OCI-LY7 (cell line): ENCODE measurements at regions of chr1 and their contacts with region 1.

Region 1: DNA sequence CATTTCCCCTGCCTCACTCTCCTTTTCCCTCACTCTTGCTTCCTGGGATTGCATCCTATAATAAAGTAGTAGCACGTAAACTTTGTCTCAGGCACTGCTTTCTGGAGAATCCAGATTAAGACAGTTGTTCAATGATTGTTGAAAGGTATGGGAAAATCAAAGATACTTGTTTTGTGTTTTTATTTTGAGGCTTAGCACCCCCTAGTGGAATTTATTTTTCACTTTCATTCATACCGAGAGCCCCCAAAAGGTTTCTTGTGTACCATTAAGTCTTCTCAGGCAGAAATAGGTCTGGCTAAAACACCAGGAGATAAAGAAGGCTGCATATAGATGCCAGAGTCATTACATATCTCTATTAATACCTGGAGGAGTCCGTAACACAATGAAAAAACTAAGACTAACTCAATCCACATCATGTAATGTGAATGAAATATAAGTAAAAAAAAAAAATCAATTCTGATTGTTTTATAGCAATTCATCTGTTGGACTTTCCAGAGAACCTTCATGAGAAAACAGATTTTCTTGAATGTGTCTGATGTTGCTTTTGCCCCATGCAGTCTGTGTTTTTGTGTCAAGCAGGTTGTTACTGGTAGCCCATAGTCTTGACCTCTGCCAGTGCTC is 103.5 kb downstream of the RPE65 start:
- DNase-seq: peak; percentile 29
- H3K4me3 ChIP-seq: no peak overlapping the region
- H3K27ac ChIP-seq: no peak overlapping the region
- H3K4me1 ChIP-seq: no peaks in the 10 kb centered on the region
- CTCF ChIP-seq: peak; percentile 86

Region 2: DNA sequence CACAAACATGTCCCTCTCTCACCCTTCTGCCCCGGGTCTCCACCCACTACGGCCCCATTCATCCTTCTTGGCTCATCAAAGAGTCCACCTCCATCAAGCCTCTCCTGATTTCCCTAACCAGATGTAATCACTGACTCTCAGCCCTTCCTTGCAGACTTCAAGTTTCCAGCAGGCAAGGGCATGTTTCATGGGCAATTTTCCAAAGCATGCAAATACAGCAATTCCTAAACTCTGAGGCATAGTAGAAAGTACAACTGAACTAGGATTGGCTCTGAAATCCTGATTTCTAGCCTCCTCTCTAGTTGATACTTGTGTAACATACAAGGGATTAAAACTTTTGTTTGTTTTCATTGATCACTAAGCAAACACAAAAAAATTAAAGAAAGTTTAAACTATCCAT is 770.4 kb before region 1 on chr1:
- CTCF ChIA-PET with region 1: no interaction called
- POLR2A ChIA-PET with region 1: no interaction called
- intact Hi-C with region 1: no loop called
- DNase-seq: no peak
- H3K4me3 ChIP-seq: no peak overlapping the region
- H3K27ac ChIP-seq: no peak overlapping the region
- H3K4me1 ChIP-seq: no peaks in the 10 kb centered on the region
- CTCF ChIP-seq: no peak

Region 3: DNA sequence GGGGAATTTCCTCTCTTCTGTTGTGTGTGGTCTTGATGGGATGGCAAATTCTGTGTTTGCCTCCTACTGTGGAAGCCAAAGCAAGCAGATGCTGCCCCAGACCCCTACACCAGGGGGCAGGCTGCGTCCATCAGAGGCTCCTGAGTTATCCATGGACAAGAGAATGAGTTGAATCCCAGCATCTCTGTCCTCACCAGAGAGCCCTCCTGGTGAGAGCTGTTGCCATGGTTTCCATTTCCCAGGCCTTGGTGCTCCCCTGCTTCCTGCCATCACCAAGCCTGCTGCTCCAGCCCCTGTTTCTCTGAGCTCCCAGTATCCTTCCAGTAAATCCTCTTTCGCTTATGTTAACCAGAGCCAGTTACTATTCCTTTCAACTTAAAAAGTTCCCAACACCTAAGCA is 492.6 kb before region 1 on chr1:
- CTCF ChIA-PET with region 1: no interaction called
- POLR2A ChIA-PET with region 1: no interaction called
- intact Hi-C with region 1: loop called (anchors 10 kb)
- DNase-seq: peak; percentile 21
- H3K4me3 ChIP-seq: no peak overlapping the region
- H3K27ac ChIP-seq: no peak overlapping the region
- H3K4me1 ChIP-seq: no peaks in the 10 kb centered on the region
- CTCF ChIP-seq: peak; percentile 75

Region 4: GRCh38 chr1:68206848-68207689 is 139.2 kb before region 1 on chr1:
- CTCF ChIA-PET with region 1: no interaction called
- POLR2A ChIA-PET with region 1: no interaction called
- intact Hi-C with region 1: no loop called
- DNase-seq: no peak
- H3K4me3 ChIP-seq: no peak overlapping the region
- H3K27ac ChIP-seq: no peak overlapping the region
- H3K4me1 ChIP-seq: no peaks in the 10 kb centered on the region
- CTCF ChIP-seq: no peak

Region 5: DNA sequence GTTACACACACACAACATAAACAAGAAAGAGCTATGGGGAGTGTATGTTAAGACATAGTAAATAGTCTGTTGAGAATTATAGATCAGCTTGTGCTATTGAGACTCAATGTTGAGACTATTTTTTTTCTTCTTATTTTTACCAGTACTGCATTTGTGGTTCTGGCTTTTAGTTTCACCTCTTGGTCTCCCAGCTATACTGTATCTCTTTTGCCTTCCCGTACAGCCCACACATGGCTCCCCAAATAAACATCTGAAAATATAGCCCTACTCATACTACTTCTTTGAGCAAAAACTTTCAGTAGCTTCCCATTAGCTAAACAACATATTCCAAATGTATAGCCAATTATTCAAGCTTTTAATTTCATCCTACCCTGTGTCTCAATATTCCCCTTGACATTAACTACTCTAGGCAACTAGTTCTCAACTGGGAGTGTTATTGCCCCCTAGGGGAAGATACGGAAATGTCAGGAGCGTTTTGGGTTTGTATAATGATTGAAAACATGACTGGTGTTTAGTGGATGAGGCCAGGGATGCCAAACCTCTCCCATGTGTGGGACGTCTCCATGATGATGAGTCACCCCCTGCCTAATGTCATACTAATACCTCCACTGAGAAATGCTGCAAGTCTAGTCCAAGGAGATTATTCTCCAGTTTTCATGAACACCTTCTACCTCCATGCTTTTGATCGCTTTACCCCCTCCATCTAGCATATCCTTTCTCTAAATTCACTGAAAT is 96.7 kb after region 1 on chr1:
- CTCF ChIA-PET with region 1: no interaction called
- POLR2A ChIA-PET with region 1: no interaction called
- intact Hi-C with region 1: loop called (anchors 5 kb)
- DNase-seq: peak; percentile 32
- H3K4me3 ChIP-seq: no peak overlapping the region
- H3K27ac ChIP-seq: no peak overlapping the region
- H3K4me1 ChIP-seq: no peaks in the 10 kb centered on the region
- CTCF ChIP-seq: peak; percentile 83

Region 6: GRCh38 chr1:68826836-68827235 is 480.5 kb after region 1 on chr1:
- CTCF ChIA-PET with region 1: no interaction called
- POLR2A ChIA-PET with region 1: no interaction called
- intact Hi-C with region 1: no loop called
- DNase-seq: no peak
- H3K4me3 ChIP-seq: no peak overlapping the region
- H3K27ac ChIP-seq: no peak overlapping the region
- H3K4me1 ChIP-seq: no peaks in the 10 kb centered on the region
- CTCF ChIP-seq: no peak